ENCODE measurements at regions of chr11 and their contacts with region 1.

Region 1: DNA sequence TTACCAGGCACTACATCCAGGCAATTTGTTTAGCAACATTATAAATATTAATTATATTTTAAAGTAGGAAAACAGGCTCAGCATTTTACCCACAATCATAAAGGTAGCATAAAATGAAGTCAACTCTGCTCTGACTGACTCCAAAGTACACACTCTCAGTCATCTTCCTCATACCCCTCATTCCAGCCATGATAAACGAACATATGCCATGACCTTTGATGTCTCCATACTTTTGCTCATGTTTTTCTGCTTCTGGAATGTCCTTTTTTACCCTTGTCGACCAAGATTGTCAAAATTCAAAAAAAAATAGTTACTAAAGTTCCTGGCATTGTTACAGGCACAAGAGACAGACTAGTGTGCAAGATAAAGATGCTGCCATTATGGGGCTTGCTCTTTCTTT is 77.7 kb upstream of the SOX6 start:
- DNase-seq: no peak
- ATAC-seq: no peak
- H3K4me3 ChIP-seq: no peak overlapping the region
- H3K27ac ChIP-seq: no peak overlapping the region
- H3K4me1 ChIP-seq: no peaks in the 10 kb centered on the region
- H3K27me3 ChIP-seq: no peaks in the 10 kb centered on the region
- CTCF ChIP-seq: no peak

Region 2: GRCh38 chr11:16372355-16372754 is 61.7 kb before region 1 on chr11:
- intact Hi-C with region 1: loop called in 1 of 2 experiments (anchors 10 kb)
- DNase-seq: no peak
- ATAC-seq: no peak
- H3K4me3 ChIP-seq: no peak overlapping the region
- H3K27ac ChIP-seq: no peak overlapping the region
- H3K4me1 ChIP-seq: no peaks in the 10 kb centered on the region
- H3K27me3 ChIP-seq: no peaks in the 10 kb centered on the region
- CTCF ChIP-seq: no peak